Kidney (tissue), 22 donors: ENCODE measurements at regions of chr16 and their contacts with region 1.

Region 1: DNA sequence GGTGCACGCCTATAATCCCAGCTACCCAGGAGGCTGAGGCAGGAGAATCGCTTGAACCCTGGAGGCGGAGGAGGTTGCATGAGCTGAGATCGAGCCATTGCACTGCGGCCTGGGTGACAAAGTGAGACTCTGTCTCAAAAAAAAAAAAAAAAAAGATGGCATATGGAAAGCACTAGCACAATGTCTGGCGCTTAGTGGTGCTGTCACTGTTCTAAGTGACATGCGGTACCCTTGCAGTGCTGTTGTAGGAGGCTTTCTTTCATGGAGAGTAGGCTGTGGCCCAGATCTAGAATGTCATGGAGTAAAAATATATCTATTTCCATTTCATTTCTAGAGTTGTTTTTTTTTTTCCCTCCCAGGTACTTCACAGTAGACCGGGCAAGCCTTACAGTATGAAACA is 14.6 kb upstream of the METTL9 start:
- DNase-seq: peak in 1 of 5 donors; percentile 39
- H3K4me3 ChIP-seq: no peak overlapping the region
- H3K27ac ChIP-seq: no peak overlapping the region
- H3K4me1 ChIP-seq: no peaks in the 10 kb centered on the region
- H3K27me3 ChIP-seq: no peaks in the 10 kb centered on the region
- CTCF ChIP-seq: no peak

Region 2: GRCh38 chr16:21713549-21714368 is 128.9 kb after region 1 on chr16:
- intact Hi-C with region 1: loop called (anchors 5 kb)
- DNase-seq: no peak
- H3K4me3 ChIP-seq: no peak overlapping the region
- H3K27ac ChIP-seq: no peak overlapping the region
- H3K4me1 ChIP-seq: no peaks in the 10 kb centered on the region
- H3K27me3 ChIP-seq: no peaks in the 10 kb centered on the region
- CTCF ChIP-seq: no peak

Region 3: GRCh38 chr16:21950782-21951521 is 366.1 kb after region 1 on chr16:
- intact Hi-C with region 1: no loop called
- DNase-seq: peak in 2 of 5 donors; percentile 24 to 41
- H3K4me3 ChIP-seq: no peak overlapping the region
- H3K27ac ChIP-seq: no peak overlapping the region
- H3K4me1 ChIP-seq: peaks cover 4 to 20% (median 6%) of the 10 kb centered on the region in 3 donors
- H3K27me3 ChIP-seq: no peaks in the 10 kb centered on the region
- CTCF ChIP-seq: peak; percentile 27

Region 4: DNA sequence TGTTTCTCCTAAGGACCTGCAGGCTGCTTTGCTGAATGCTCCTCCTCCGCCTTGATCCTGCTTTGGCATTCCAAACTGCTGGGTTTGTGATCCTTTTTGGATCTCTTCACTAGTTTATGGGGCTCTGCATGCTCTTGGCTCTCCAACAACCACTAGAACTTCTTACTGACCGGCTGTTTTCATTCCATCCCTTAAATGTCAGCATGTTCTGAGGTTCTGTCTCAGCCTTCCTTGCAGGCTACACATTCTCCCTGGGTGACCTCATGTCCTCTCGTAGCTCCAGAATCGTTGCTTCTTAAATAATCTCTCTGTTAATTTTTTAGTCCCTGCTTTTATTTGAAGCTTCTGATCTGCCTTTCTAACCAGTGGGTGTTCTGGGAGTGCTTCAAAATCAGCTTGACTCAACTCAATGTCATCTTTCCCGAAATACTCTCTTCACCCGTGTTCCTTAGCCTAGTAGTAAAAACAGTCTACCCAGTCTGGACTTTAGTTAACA is 1110.1 kb after region 1 on chr16:
- intact Hi-C with region 1: loop called (anchors 5 kb)
- DNase-seq: no peak
- H3K4me3 ChIP-seq: no peak overlapping the region
- H3K27ac ChIP-seq: peak overlapping the region in 1 of 2 donors; percentile 6
- H3K4me1 ChIP-seq: no peaks in the 10 kb centered on the region
- H3K27me3 ChIP-seq: no peaks in the 10 kb centered on the region
- CTCF ChIP-seq: no peak